ENCODE measurements at regions of chr9 and their contacts with region 1.

Region 1: GRCh38 chr9:99266255-99267023 is 44.4 kb downstream of the SEC61B start:
- DNase-seq: peak; percentile 34 to 67 (median 61)
- H3K4me3 ChIP-seq: no peak overlapping the region
- H3K4me3 Mint-ChIP-seq: peak overlapping the region in 1 of 2 donors; percentile 39
- H3K27ac ChIP-seq: no peak overlapping the region
- H3K27ac Mint-ChIP-seq: peak overlapping the region in 1 of 7 donors; percentile 13
- H3K4me1 ChIP-seq: peaks cover 6 to 7% of the 10 kb centered on the region in 2 donors
- H3K4me1 Mint-ChIP-seq: peaks cover 20% of the 10 kb centered on the region
- H3K27me3 ChIP-seq: no peaks in the 10 kb centered on the region
- H3K27me3 Mint-ChIP-seq: peaks cover 0 to 3% (median 2%) of the 10 kb centered on the region in 3 donors
- CTCF ChIP-seq: peak; percentile 96

Region 2: GRCh38 chr9:99307851-99308250 is 41.4 kb after region 1 on chr9:
- intact Hi-C with region 1: no loop called
- DNase-seq: no peak
- H3K4me3 ChIP-seq: no peak overlapping the region
- H3K4me3 Mint-ChIP-seq: no peak overlapping the region
- H3K27ac ChIP-seq: no peak overlapping the region
- H3K27ac Mint-ChIP-seq: no peak overlapping the region
- H3K4me1 ChIP-seq: no peaks in the 10 kb centered on the region
- H3K4me1 Mint-ChIP-seq: peaks cover 4% of the 10 kb centered on the region
- H3K27me3 ChIP-seq: no peaks in the 10 kb centered on the region
- H3K27me3 Mint-ChIP-seq: no peaks in the 10 kb centered on the region
- CTCF ChIP-seq: no peak

Region 3: GRCh38 chr9:100011062-100011681 is 744.7 kb after region 1 on chr9:
- intact Hi-C with region 1: loop called (anchors 5 kb)
- DNase-seq: peak; percentile 43 to 61 (median 58)
- H3K4me3 ChIP-seq: no peak overlapping the region
- H3K4me3 Mint-ChIP-seq: no peak overlapping the region
- H3K27ac ChIP-seq: no peak overlapping the region
- H3K27ac Mint-ChIP-seq: no peak overlapping the region
- H3K4me1 ChIP-seq: no peaks in the 10 kb centered on the region
- H3K4me1 Mint-ChIP-seq: no peaks in the 10 kb centered on the region
- H3K27me3 ChIP-seq: no peaks in the 10 kb centered on the region
- H3K27me3 Mint-ChIP-seq: no peaks in the 10 kb centered on the region
- CTCF ChIP-seq: peak; percentile 82

Region 4: GRCh38 chr9:100317706-100318105 is 1051.3 kb after region 1 on chr9:
- intact Hi-C with region 1: loop called in 1 of 2 experiments (anchors 10 kb)
- DNase-seq: no peak
- H3K4me3 ChIP-seq: no peak overlapping the region
- H3K4me3 Mint-ChIP-seq: no peak overlapping the region
- H3K27ac ChIP-seq: no peak overlapping the region
- H3K27ac Mint-ChIP-seq: no peak overlapping the region
- H3K4me1 ChIP-seq: no peaks in the 10 kb centered on the region
- H3K4me1 Mint-ChIP-seq: peaks cover 7% of the 10 kb centered on the region
- H3K27me3 ChIP-seq: no peaks in the 10 kb centered on the region
- H3K27me3 Mint-ChIP-seq: peaks cover 0 to 1% (median 0%) of the 10 kb centered on the region in 3 donors
- CTCF ChIP-seq: no peak

Measured in CD14-positive monocyte (primary cell).